Activated CD4-positive, alpha-beta T cell treated with anti-CD3 and anti-CD28 coated beads, Interleukin-2, amount 10 ng/mL, durations not matched to agents 7 days and 5 days (primary cell): ENCODE measurements at regions of chr1 and their contacts with region 1.

Region 1: GRCh38 chr1:33295450-33296081 is 25.3 kb downstream of the A3GALT2 start:
- DNase-seq: peak; percentile 89
- H3K4me3 Mint-ChIP-seq: no peak overlapping the region
- H3K27ac Mint-ChIP-seq: no peak overlapping the region
- H3K4me1 Mint-ChIP-seq: peaks cover 19% of the 10 kb centered on the region
- H3K27me3 Mint-ChIP-seq: no peaks in the 10 kb centered on the region

Region 2: GRCh38 chr1:32666901-32667566 is 628.5 kb before region 1 on chr1:
- CTCF ChIA-PET with region 1: no interaction called
- POLR2A ChIA-PET with region 1: no interaction called
- DNase-seq: no peak
- H3K4me3 Mint-ChIP-seq: no peak overlapping the region
- H3K27ac Mint-ChIP-seq: no peak overlapping the region
- H3K4me1 Mint-ChIP-seq: peaks cover 5% of the 10 kb centered on the region
- H3K27me3 Mint-ChIP-seq: no peaks in the 10 kb centered on the region

Region 3: GRCh38 chr1:33312413-33312749 is 16.8 kb after region 1 on chr1:
- CTCF ChIA-PET with region 1: interaction called, 13 read pairs
- POLR2A ChIA-PET with region 1: no interaction called
- DNase-seq: no peak
- H3K4me3 Mint-ChIP-seq: no peak overlapping the region
- H3K27ac Mint-ChIP-seq: no peak overlapping the region
- H3K4me1 Mint-ChIP-seq: peaks cover 2% of the 10 kb centered on the region
- H3K27me3 Mint-ChIP-seq: peaks cover 11% of the 10 kb centered on the region

Region 4: DNA sequence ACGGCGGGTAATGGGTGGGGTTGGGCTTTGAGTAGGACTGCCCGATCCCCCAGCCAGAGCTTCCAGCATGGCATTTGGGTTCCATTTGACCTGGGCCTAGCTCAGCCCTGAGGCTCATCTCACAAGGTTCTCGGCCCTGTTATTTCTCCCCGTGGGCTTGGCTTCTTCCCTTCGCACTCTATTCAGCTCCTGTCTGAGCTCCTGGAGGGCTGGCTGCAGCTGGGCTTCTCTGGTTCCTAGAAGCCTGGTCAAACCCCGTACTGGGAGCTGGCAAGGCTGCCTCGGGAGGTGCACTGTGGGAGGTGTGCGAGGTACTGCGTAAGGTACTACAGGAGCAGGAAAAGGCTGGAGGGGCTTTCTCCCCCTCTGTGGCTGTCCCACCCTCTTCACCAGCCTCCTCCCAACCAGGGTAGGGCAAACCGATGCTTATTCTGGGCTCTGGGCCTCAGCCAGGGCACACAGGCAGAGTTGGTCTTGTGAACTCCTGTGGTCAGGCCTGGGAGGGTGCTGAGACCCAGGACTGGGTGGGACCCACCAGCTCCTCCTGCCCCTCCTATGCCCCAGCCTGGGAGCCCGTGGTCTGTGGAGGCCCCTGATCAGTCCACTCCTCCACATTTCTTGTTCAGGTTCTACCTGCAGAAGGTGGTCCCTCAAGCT is 24.5 kb after region 1 on chr1:
- CTCF ChIA-PET with region 1: interaction called, 11 read pairs
- POLR2A ChIA-PET with region 1: no interaction called
- DNase-seq: no peak
- H3K4me3 Mint-ChIP-seq: no peak overlapping the region
- H3K27ac Mint-ChIP-seq: no peak overlapping the region
- H3K4me1 Mint-ChIP-seq: no peaks in the 10 kb centered on the region
- H3K27me3 Mint-ChIP-seq: peaks cover 13% of the 10 kb centered on the region

Region 5: DNA sequence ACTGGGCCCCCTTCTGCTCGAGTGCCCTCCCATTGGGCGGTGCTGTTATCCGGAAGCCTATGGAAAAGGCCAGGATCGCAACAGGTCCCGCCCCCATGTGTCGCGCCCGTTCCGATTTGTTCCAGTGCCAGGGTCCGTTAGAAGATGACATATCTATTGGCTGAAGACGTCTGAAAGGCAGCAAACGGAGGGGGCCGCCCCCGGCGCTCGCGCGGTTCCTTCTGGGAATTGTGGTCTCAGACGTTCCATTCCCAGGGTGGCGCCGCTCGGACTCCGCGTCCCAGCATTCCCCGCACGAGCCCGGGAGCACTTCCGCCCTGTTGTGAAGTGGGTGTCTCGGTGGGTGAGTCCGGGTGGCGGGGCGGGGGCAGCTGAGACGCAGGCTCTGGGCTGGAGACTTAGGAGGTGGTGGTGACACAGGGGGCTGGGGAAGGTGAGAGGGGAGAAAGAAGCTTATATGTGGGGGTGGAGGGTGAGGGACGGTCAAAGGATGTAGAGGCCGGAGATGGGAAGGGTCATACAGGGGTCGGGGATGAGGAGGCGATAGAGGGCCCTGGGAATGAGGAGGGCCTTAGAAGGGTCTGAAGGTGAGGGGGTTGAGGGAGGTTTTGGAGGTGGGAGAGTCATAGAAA is 176.9 kb after region 1 on chr1 and contains the start of gene ZSCAN20:
- CTCF ChIA-PET with region 1: interaction called, 16 read pairs
- POLR2A ChIA-PET with region 1: no interaction called
- DNase-seq: peak; percentile 89
- H3K4me3 Mint-ChIP-seq: peak within 1 kb of the TSS; percentile 76
- H3K27ac Mint-ChIP-seq: peak within 1 kb of the TSS; percentile 73
- H3K4me1 Mint-ChIP-seq: peaks cover 30% of the 10 kb centered on the region
- H3K27me3 Mint-ChIP-seq: no peaks in the 10 kb centered on the region
- total RNA-seq, gene ZSCAN20: 1.5 to 2.2 TPM